ENCODE measurements at regions of chr15 and their contacts with region 1.

Region 1: GRCh38 chr15:71455107-71455506 is 339.8 kb downstream of the THSD4 start:
- H3K4me3 ChIP-seq: no peak overlapping the region
- H3K27ac ChIP-seq: 0 out of 2 replicates have a peak overlapping the region, but pooled peaks have one; percentile 12
- H3K4me1 ChIP-seq: peaks cover 20% of the 10 kb centered on the region
- CTCF ChIP-seq: no peak

Region 2: GRCh38 chr15:71607383-71607782 is 152.3 kb after region 1 on chr15:
- CTCF ChIA-PET with region 1: no interaction called
- POLR2A ChIA-PET with region 1: no interaction called
- H3K4me3 ChIP-seq: no peak overlapping the region
- H3K27ac ChIP-seq: no peak overlapping the region
- H3K4me1 ChIP-seq: no peaks in the 10 kb centered on the region
- CTCF ChIP-seq: no peak

Region 3: DNA sequence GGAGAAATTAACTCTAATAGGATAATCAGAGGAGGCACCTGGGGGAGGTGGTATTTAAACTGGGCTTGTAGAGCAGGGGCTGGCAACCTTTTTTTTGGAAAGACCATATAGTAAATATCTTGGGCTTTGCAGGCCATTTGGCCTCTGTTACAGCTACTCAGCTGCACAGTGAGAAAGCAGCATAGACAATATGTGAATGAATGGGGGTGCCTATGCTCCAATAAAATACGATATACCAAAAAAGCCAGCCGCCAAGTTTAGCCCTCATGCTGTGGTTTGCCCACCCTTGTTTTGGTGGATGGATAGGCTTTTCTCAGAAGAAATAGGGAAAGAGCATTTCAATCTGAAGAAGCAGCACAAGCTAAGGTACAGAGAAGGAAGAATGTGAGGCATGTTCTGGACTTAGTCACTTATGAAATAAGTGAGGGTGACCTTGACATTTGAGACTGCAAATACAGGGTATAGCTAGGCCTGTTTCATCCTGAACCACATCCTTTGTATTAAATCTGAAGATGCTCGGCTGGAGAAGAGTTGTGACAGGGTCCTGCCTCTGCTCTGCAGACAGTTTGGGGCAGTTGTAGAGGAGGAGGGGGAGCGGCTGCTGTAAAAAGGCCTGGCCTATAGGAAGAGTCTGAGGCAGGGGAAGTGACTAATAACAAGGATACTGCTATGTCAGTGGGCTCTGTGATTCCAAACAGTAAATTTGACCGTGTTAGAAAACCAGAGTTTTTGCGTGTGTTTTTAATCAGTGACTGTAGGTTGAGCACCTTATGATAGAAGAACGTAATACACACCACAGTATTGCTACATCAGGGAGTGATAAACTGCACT is 224.3 kb after region 1 on chr15:
- CTCF ChIA-PET with region 1: no interaction called
- POLR2A ChIA-PET with region 1: interaction called, 12 read pairs
- H3K4me3 ChIP-seq: no peak overlapping the region
- H3K27ac ChIP-seq: no peak overlapping the region
- H3K4me1 ChIP-seq: peaks cover 21% of the 10 kb centered on the region
- CTCF ChIP-seq: no peak

Measured in HEK293 (cell line).